CD8-positive, alpha-beta T cell (primary cell): ENCODE measurements at regions of chr7 and their contacts with region 1.

Region 1: DNA sequence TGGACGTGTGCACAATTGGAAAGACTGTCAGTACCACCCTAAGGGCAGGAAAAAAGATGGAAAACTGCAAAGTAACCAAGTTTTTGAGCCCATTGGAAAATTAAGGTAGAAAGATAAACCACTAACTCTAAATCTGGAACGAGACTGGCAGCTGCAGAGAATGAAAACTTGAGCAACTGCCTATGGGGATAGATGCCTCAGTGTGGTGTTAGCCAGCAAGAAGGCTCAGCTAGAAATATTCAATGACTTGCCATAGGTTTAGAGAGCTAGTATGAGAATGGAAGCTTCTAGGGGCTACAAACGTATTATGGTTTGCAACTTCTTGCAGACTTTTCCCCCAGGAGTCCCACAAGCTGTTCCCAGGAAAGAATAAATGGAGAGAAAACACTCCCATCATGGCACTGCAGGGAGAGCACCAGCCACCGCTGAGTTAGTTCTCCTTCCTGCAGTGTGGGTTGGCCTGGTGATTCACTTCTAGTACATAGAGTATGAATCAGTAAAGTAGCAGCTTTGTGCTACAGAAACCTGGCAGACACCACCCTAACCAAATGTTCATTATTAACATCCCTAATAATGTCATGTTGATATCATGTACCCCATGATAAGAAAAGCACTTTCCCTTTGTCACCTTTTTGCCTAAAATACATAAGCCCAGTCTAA is 372.4 kb upstream of the VWC2 start:
- DNase-seq: no peak
- ATAC-seq: no peak
- H3K4me3 ChIP-seq: no peak overlapping the region
- H3K4me3 Mint-ChIP-seq: no peak overlapping the region
- H3K27ac ChIP-seq: no peak overlapping the region
- H3K27ac Mint-ChIP-seq: no peak overlapping the region
- H3K4me1 ChIP-seq: no peaks in the 10 kb centered on the region
- H3K4me1 Mint-ChIP-seq: no peaks in the 10 kb centered on the region
- H3K27me3 ChIP-seq: no peaks in the 10 kb centered on the region
- H3K27me3 Mint-ChIP-seq: no peaks in the 10 kb centered on the region
- CTCF ChIP-seq: no peak

Region 2: DNA sequence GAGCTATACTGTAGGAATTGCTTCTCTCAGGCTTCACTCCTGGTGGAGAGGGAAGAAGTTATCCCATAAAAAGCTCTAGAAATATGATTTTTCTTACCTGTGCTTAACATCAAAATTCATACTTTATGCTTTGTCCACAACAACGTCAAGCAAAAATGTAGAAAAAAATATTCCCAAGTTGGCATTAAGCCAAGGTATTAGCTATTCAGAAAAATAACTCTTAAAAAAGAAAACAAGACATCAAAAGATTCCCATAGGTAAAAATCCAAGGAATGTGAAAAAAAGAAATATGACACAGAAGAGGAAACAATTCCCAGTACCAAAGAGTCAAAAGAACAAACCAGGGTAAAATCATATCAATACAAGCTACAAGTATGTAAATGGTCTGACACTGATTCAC is 60.8 kb after region 1 on chr7:
- CTCF ChIA-PET with region 1: no interaction called
- POLR2A ChIA-PET with region 1: no interaction called
- intact Hi-C with region 1: loop called in 1 of 2 experiments (anchors 10 kb)
- DNase-seq: no peak
- ATAC-seq: no peak
- H3K4me3 ChIP-seq: no peak overlapping the region
- H3K4me3 Mint-ChIP-seq: no peak overlapping the region
- H3K27ac ChIP-seq: no peak overlapping the region
- H3K27ac Mint-ChIP-seq: no peak overlapping the region
- H3K4me1 ChIP-seq: no peaks in the 10 kb centered on the region
- H3K4me1 Mint-ChIP-seq: no peaks in the 10 kb centered on the region
- H3K27me3 ChIP-seq: no peaks in the 10 kb centered on the region
- H3K27me3 Mint-ChIP-seq: no peaks in the 10 kb centered on the region
- CTCF ChIP-seq: no peak